CD4-positive, alpha-beta T cell (primary cell): ENCODE measurements at regions of chr11 and their contacts with region 1.

Region 1: GRCh38 chr11:58579192-58580129 is 598 bp downstream of the ZFP91 start:
- DNase-seq: peak; percentile 87 to 97 (median 91)
- ATAC-seq: peak; percentile 37
- H3K4me3 ChIP-seq: peak overlapping the region; percentile 87
- H3K4me3 Mint-ChIP-seq: peak overlapping the region; percentile 99
- H3K27ac ChIP-seq: peak overlapping the region; percentile 90 to 99
- H3K27ac Mint-ChIP-seq: peak overlapping the region; percentile 99
- H3K4me1 ChIP-seq: peaks cover 22% of the 10 kb centered on the region
- H3K4me1 Mint-ChIP-seq: peaks cover 76% of the 10 kb centered on the region
- H3K27me3 ChIP-seq: no peaks in the 10 kb centered on the region
- H3K27me3 Mint-ChIP-seq: no peaks in the 10 kb centered on the region
- CTCF ChIP-seq: peak; percentile 81

Region 2: GRCh38 chr11:57530596-57531507 is 1048.6 kb before region 1 on chr11 and contains the start of gene TIMM10:
- CTCF ChIA-PET with region 1: no interaction called
- POLR2A ChIA-PET with region 1: no interaction called
- intact Hi-C with region 1: loop called in 1 of 2 experiments (anchors 2 kb)
- DNase-seq: peak; percentile 82 to 99 (median 91)
- ATAC-seq: peak; percentile 91
- H3K4me3 ChIP-seq: peak within 1 kb of the TSS; percentile 85
- H3K4me3 Mint-ChIP-seq: peak within 1 kb of the TSS; percentile 89
- H3K27ac ChIP-seq: peak within 1 kb of the TSS; percentile 78 to 91
- H3K27ac Mint-ChIP-seq: peak within 1 kb of the TSS; percentile 90
- H3K4me1 ChIP-seq: peaks cover 24% of the 10 kb centered on the region
- H3K4me1 Mint-ChIP-seq: peaks cover 25% of the 10 kb centered on the region
- H3K27me3 ChIP-seq: no peaks in the 10 kb centered on the region
- H3K27me3 Mint-ChIP-seq: no peaks in the 10 kb centered on the region
- CTCF ChIP-seq: no peak
- total RNA-seq, gene TIMM10: 28.0 TPM

Region 3: DNA sequence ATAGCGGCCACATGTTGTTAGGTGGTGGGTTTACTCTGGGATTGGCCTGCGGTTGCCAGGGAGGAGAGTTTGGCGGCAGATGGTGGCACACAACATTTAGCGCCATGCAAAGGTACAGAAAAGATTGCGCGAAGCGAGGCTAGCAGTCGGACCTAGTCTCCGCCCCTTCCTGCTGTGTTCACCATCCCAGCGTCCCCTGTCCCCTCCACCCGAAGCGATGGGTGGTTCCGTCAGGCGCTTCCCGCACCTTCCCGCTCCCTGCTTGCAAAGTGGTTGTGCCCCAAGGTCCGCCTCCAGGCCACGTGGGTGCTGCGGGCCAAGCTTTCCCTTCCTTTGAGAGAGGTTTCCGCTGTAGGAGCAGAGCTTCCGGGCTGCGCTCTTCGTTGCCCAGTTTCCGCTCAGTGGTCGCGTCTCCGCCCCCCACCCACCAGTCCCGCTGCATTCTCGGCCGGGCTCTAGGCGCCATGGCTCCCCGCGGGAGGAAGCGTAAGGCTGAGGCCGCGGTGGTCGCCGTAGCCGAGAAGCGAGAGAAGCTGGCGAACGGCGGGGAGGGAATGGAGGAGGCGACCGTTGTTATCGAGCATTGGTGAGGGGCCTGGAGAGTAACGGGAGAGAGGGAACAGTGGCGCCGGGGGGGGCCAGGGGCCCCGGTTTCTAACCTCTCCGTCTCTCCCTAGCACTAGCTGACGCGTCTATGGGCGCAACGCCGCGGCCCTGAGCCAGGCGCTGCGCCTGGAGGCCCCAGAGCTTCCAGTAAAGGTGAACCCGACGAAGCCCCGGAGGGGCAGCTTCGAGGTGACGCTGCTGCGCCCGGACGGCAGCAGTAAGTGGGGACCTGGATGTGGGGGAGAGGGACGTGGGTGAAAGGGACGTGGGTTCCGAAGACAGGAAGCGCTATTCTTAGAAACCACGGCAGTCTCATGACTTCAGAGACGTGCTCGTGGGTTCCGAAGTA is 838.1 kb before region 1 on chr11 and contains the start of gene SELENOH:
- CTCF ChIA-PET with region 1: no interaction called
- POLR2A ChIA-PET with region 1: interaction called, 18 read pairs
- intact Hi-C with region 1: no loop called
- DNase-seq: peak; percentile 82 to 97 (median 90)
- ATAC-seq: peak; percentile 89
- H3K4me3 ChIP-seq: peak within 1 kb of the TSS; percentile 92
- H3K4me3 Mint-ChIP-seq: peak within 1 kb of the TSS; percentile 97
- H3K27ac ChIP-seq: peak within 1 kb of the TSS; percentile 91 to 96
- H3K27ac Mint-ChIP-seq: peak within 1 kb of the TSS; percentile 95
- H3K4me1 ChIP-seq: peaks cover 31% of the 10 kb centered on the region
- H3K4me1 Mint-ChIP-seq: peaks cover 38% of the 10 kb centered on the region
- H3K27me3 ChIP-seq: no peaks in the 10 kb centered on the region
- H3K27me3 Mint-ChIP-seq: no peaks in the 10 kb centered on the region
- CTCF ChIP-seq: no peak
- total RNA-seq, gene SELENOH: 48.0 to 48.5 TPM

Region 4: GRCh38 chr11:58446294-58446693 is 133.2 kb before region 1 on chr11:
- CTCF ChIA-PET with region 1: no interaction called
- POLR2A ChIA-PET with region 1: no interaction called
- intact Hi-C with region 1: no loop called
- DNase-seq: no peak
- ATAC-seq: no peak
- H3K4me3 ChIP-seq: no peak overlapping the region
- H3K4me3 Mint-ChIP-seq: no peak overlapping the region
- H3K27ac ChIP-seq: no peak overlapping the region
- H3K27ac Mint-ChIP-seq: no peak overlapping the region
- H3K4me1 ChIP-seq: no peaks in the 10 kb centered on the region
- H3K4me1 Mint-ChIP-seq: no peaks in the 10 kb centered on the region
- H3K27me3 ChIP-seq: peaks cover 0 to 4% of the 10 kb centered on the region in 2 experiments
- H3K27me3 Mint-ChIP-seq: peaks cover 46% of the 10 kb centered on the region
- CTCF ChIP-seq: no peak

Region 5: DNA sequence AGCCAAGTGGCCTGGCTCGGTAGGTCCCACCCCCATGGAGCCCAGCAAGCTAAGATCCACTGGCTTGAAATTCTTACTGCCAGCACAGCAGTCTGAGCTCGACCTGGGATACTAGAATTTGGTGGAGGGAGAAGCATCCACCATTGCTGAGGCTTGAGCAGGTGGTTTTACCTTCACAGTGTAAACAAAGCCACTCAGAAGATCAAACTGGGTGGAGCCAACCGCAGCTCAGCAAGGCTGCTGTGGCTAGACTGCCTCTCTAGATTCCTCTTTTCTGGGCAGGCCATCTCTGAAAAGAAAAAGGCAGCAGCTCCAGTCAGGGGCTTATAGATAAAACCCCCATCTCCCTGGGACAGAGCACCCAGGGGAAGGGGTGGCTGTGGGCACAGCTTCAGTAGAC is 49.2 kb before region 1 on chr11:
- CTCF ChIA-PET with region 1: no interaction called
- POLR2A ChIA-PET with region 1: interaction called, 60 read pairs
- intact Hi-C with region 1: loop called in 1 of 2 experiments (anchors 1 kb)
- DNase-seq: peak in 13 of 14 experiments; percentile 14 to 72 (median 45)
- ATAC-seq: peak; percentile 81
- H3K4me3 ChIP-seq: no peak overlapping the region
- H3K4me3 Mint-ChIP-seq: peak overlapping the region; percentile 62
- H3K27ac ChIP-seq: peak overlapping the region; percentile 52 to 64
- H3K27ac Mint-ChIP-seq: peak overlapping the region; percentile 97
- H3K4me1 ChIP-seq: peaks cover 28% of the 10 kb centered on the region
- H3K4me1 Mint-ChIP-seq: peaks cover 80% of the 10 kb centered on the region
- H3K27me3 ChIP-seq: no peaks in the 10 kb centered on the region
- H3K27me3 Mint-ChIP-seq: no peaks in the 10 kb centered on the region
- CTCF ChIP-seq: no peak

Region 6: DNA sequence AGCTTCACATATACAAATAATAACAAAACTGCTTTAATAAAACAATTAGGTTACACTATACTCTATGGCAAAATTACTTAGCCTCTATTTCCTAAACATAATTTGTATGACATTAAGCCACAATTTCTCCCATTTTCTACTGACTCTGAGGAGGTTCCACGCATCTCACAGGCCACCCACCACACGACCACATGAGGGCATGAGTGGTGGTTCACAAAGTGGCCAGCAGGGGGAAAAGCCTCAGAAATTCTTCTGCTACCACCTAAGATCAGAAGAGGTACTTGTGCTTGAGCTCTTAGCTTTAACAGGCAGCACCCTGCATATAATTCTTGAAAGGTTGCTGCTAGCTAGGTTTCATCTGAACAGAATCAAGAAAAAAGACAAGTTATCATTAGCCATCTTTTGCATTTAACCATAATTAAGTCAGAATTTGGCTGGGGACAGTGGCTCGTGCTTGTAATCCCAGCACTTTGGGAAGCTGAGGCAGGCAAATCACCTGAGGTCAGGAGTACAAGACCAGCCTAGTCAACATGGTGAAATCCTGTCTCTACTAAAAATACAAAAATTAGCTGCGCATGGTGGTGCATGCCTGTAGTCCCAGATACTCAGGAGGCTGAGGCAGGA is 11.5 kb before region 1 on chr11:
- CTCF ChIA-PET with region 1: interaction called, 53 read pairs
- POLR2A ChIA-PET with region 1: interaction called, 108 read pairs
- intact Hi-C with region 1: loop called in 1 of 2 experiments (anchors 1 kb)
- DNase-seq: peak; percentile 61 to 90 (median 75)
- ATAC-seq: peak; percentile 98
- H3K4me3 ChIP-seq: no peak overlapping the region
- H3K4me3 Mint-ChIP-seq: peak overlapping the region; percentile 65
- H3K27ac ChIP-seq: no peak overlapping the region
- H3K27ac Mint-ChIP-seq: peak overlapping the region; percentile 57
- H3K4me1 ChIP-seq: peaks cover 49% of the 10 kb centered on the region
- H3K4me1 Mint-ChIP-seq: peaks cover 64% of the 10 kb centered on the region
- H3K27me3 ChIP-seq: no peaks in the 10 kb centered on the region
- H3K27me3 Mint-ChIP-seq: no peaks in the 10 kb centered on the region
- CTCF ChIP-seq: peak; percentile 81

Region 7: GRCh38 chr11:58675334-58676155 is 96.1 kb after region 1 on chr11:
- CTCF ChIA-PET with region 1: no interaction called
- POLR2A ChIA-PET with region 1: interaction called, 6 read pairs
- intact Hi-C with region 1: loop called in 1 of 2 experiments (anchors 5 kb)
- DNase-seq: peak; percentile 55 to 82 (median 70)
- ATAC-seq: peak; percentile 76
- H3K4me3 ChIP-seq: no peak overlapping the region
- H3K4me3 Mint-ChIP-seq: no peak overlapping the region
- H3K27ac ChIP-seq: no peak overlapping the region
- H3K27ac Mint-ChIP-seq: no peak overlapping the region
- H3K4me1 ChIP-seq: peaks cover 4% of the 10 kb centered on the region
- H3K4me1 Mint-ChIP-seq: no peaks in the 10 kb centered on the region
- H3K27me3 ChIP-seq: peaks cover 8 to 13% of the 10 kb centered on the region in 2 experiments
- H3K27me3 Mint-ChIP-seq: no peaks in the 10 kb centered on the region
- CTCF ChIP-seq: peak; percentile 93

Region 8: DNA sequence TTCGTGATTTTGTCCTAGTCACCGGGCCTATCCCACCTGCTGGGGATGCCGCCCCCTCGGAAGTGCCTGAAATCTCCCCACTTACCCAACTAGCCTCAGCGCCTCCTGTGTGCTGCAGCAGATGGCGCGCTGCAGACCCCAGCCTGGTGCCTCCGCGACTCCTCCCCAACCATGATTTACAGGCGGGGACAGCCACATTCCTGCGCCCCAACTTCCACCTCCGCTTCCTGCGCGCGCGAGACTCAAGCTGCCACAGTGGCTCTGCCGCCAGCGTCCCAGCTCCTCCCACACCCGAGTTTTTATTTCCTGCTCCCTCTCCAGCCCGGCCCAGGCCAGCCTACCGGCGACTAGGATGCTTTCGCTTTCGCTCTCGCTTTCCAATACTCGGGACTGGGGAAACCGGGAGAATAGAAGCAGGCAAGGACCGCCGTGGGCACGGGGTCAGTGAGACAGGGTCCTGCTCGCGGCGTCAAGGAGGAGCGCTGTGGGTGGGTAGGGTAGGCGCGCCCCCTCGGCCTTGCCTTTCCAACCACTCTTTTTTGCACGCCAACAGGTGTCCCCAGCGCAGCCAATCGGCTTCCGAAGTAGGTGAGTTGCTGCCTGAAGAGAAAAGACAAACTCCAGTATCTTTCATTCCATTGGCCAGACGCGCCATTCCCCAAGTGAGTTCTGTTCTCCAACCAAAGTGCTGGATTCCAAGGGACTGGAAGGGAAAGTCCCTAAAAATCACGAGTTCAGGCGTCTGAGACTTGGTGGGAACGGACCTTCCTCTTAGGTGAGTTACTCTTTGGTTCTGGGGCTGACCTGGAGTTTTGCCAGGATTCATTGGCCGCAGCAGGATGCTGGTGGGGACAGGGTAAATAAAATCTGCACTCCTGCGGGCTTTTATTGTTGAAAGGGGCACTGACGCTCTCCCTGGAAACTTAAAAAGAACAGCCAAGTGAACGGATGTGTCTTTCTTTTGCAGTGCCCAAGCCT is 563.4 kb after region 1 on chr11 and contains the start of gene FAM111A:
- CTCF ChIA-PET with region 1: no interaction called
- POLR2A ChIA-PET with region 1: interaction called, 6 read pairs
- intact Hi-C with region 1: loop called (anchors 5 to 10 kb)
- DNase-seq: peak; percentile 67 to 95 (median 82)
- ATAC-seq: peak; percentile 81
- H3K4me3 ChIP-seq: peak within 1 kb of the TSS; percentile 79
- H3K4me3 Mint-ChIP-seq: peak within 1 kb of the TSS; percentile 94
- H3K27ac ChIP-seq: peak within 1 kb of the TSS; percentile 80 to 91
- H3K27ac Mint-ChIP-seq: peak within 1 kb of the TSS; percentile 90
- H3K4me1 ChIP-seq: peaks cover 23% of the 10 kb centered on the region
- H3K4me1 Mint-ChIP-seq: peaks cover 50% of the 10 kb centered on the region
- H3K27me3 ChIP-seq: no peaks in the 10 kb centered on the region
- H3K27me3 Mint-ChIP-seq: no peaks in the 10 kb centered on the region
- CTCF ChIP-seq: no peak
- total RNA-seq, gene FAM111A: 32.8 to 34.4 TPM